ENCODE measurements at regions of chr7 and their contacts with region 1.

Region 1: DNA sequence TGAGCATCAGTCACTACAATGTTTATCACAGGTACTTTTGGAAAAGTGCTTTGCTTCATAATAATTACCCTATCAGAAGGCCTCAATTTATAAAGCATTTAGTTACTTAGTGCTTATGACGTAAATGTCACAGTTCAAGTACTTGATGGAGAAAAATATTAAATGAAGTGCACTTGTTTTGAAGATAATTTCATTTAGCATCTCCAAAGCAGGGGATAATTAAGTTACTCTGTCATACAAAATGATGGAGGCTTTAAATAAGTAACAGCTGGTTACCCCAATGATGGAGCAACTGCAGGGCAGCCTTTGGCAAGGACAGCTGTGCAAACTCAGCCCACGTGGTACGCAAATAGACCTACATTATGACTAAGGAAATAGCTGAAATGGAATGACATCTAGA is 768.8 kb downstream of the GRM8 start:
- DNase-seq: no peak
- H3K4me3 Mint-ChIP-seq: no peak overlapping the region
- H3K27ac Mint-ChIP-seq: no peak overlapping the region
- H3K4me1 Mint-ChIP-seq: no peaks in the 10 kb centered on the region
- H3K27me3 Mint-ChIP-seq: no peaks in the 10 kb centered on the region
- CTCF ChIP-seq: no peak

Region 2: DNA sequence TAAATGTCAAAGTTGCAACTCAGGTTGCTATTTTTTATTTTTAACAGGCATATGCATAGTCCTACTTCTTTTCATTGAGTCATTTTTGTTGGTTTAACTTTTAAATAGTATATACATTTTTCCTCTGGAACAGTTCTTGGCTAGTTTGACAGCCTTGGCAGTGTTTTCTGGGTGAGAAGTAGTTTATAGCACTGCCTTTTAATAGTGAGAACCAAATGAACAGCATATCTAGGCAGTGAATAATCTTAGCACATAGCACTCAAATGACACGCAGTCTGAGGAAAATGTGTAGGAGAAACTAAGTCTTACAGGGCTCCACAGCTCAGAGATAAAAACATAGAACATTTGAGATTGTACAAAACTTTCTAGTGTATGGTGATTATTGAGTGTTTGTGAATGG is 1288.8 kb before region 1 on chr7:
- CTCF ChIA-PET with region 1: interaction called, 16 read pairs
- intact Hi-C with region 1: no loop called
- DNase-seq: no peak
- H3K4me3 Mint-ChIP-seq: no peak overlapping the region
- H3K27ac Mint-ChIP-seq: no peak overlapping the region
- H3K4me1 Mint-ChIP-seq: no peaks in the 10 kb centered on the region
- H3K27me3 Mint-ChIP-seq: no peaks in the 10 kb centered on the region
- CTCF ChIP-seq: no peak

Region 3: DNA sequence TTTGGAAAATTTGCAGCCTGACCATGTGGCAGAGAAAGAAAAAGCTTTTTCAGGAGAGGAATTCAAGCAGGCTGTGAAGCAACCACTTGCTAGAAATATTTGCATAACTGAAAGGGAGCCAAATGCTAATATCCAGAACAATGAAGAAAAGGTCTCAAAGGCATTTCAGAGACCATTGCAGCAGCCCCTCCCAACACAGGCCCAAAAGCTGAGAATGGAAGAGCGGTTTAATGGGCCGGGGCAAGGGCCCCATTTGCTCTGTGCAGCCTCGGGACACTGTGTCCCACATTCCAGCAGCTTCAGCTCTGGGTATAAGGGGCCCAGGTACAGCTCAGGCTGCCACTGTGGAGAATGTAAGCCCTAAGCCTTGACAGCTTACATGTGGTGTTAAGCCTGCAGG is 636.3 kb before region 1 on chr7:
- CTCF ChIA-PET with region 1: no interaction called
- intact Hi-C with region 1: no loop called
- DNase-seq: no peak
- H3K4me3 Mint-ChIP-seq: no peak overlapping the region
- H3K27ac Mint-ChIP-seq: no peak overlapping the region
- H3K4me1 Mint-ChIP-seq: no peaks in the 10 kb centered on the region
- H3K27me3 Mint-ChIP-seq: no peaks in the 10 kb centered on the region
- CTCF ChIP-seq: no peak

Region 4: GRCh38 chr7:126426652-126427051 is 57.3 kb before region 1 on chr7:
- CTCF ChIA-PET with region 1: no interaction called
- intact Hi-C with region 1: no loop called
- DNase-seq: no peak
- H3K4me3 Mint-ChIP-seq: no peak overlapping the region
- H3K27ac Mint-ChIP-seq: no peak overlapping the region
- H3K4me1 Mint-ChIP-seq: no peaks in the 10 kb centered on the region
- H3K27me3 Mint-ChIP-seq: no peaks in the 10 kb centered on the region
- CTCF ChIP-seq: no peak

Region 5: DNA sequence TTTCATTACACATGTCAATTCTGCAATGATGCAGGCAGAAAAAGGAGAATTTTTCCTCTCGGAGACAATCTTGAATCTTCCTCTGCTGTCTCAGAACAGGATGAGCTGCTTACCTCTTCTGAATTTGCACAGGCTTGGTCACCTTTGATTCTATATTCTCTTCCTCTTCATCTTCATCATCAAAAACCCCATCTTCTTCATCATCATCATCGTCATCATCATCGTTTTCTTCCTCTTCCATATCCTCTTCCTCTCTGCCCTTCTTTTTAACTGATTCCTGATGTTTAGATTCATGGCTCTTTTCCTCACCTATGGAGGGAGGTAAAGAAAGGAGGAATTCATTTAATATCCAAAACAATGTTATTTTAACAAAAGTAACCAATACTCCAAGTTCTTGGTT is 1851.8 kb after region 1 on chr7:
- CTCF ChIA-PET with region 1: no interaction called
- intact Hi-C with region 1: no loop called
- DNase-seq: no peak
- H3K4me3 Mint-ChIP-seq: no peak overlapping the region
- H3K27ac Mint-ChIP-seq: no peak overlapping the region
- H3K4me1 Mint-ChIP-seq: no peaks in the 10 kb centered on the region
- H3K27me3 Mint-ChIP-seq: no peaks in the 10 kb centered on the region
- CTCF ChIP-seq: no peak